Breast epithelium (tissue), 4 donors: ENCODE measurements at regions of chr17 and their contacts with region 1.

Region 1: DNA sequence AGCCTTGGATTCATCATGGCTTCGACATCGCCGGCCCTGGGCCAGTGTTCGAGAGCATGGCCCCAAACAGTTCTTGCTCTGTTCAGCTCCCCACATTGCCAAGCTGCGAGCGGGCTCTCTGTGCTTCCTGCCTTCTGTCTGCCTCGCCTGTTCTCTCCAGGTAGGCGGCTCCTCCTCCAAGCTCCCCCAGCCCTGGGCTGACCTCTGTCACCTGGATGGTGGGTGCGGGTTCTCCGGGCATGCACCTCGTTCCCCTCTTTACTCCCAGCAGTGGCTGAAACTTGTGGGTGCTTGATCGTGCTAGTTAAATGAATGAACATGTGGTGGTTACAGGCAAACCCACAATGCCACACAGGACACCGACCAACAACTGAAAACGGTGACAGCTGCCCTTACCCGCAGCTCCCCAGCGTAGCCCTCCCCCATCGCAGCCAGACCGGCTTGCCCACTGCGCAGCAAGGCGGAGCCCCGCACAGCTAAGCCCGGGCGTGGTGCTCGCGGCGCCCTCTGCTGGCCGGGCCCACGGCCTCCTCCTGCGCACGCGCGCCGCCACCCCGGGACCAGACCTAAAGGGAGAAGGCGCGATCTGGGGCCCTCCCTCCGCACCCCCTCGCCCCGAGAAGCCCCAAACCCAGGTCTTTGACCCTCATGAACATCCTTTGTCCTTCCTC is 23.0 kb upstream of the EIF1 start:
- DNase-seq: peak; percentile 91 to 93
- H3K4me3 ChIP-seq: peak overlapping the region; percentile 40 to 72 (median 52)
- H3K27ac ChIP-seq: peak overlapping the region; percentile 93 to 94
- H3K4me1 ChIP-seq: peaks cover 0 to 9% of the 10 kb centered on the region in 2 donors
- H3K27me3 ChIP-seq: no peaks in the 10 kb centered on the region
- CTCF ChIP-seq: peak; percentile 93 to 96 (median 95)
- POLR2A ChIP-seq: peak; percentile 34

Region 2: GRCh38 chr17:41648411-41649195 is 17.1 kb before region 1 on chr17:
- intact Hi-C with region 1: loop called (anchors 1 kb)
- DNase-seq: peak; percentile 89 to 92
- H3K4me3 ChIP-seq: peak overlapping the region; percentile 21 to 66 (median 46)
- H3K27ac ChIP-seq: peak overlapping the region; percentile 97 to 100
- H3K4me1 ChIP-seq: peaks cover 27 to 60% of the 10 kb centered on the region in 2 donors
- H3K27me3 ChIP-seq: no peaks in the 10 kb centered on the region
- CTCF ChIP-seq: peak; percentile 95 to 99 (median 98)
- POLR2A ChIP-seq: no peak